ENCODE measurements at regions of chr9 and their contacts with region 1.

Region 1: DNA sequence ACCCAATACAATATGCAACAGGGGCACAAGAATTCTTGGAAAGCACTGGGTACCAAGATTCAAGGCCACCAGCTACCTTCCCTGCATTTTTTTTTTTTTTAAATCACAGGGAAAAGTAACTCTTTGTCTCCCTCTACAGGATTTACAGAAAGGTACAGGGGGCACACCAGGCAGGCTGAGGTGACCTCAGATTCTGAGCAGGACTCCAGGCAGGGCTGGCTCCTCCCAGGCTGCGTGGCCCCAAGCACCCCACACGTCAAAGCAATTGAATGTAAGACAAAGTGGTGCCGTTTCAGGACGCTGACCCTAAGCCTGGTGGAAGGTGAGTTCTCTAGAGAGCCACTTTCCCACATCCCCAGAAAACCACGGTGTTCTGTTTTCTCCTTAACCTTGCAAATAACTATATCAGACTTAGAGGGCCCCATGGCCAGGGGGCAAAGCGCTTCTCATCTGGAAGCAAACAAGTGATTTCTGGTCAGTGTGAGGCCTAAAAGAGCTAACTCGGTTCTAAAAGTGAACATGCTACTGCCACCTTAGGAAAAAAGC is 222.6 kb downstream of the ROR2 start:
- DNase-seq: no peak
- H3K4me3 ChIP-seq: no peak overlapping the region
- CTCF ChIP-seq: peak; percentile 46

Region 2: DNA sequence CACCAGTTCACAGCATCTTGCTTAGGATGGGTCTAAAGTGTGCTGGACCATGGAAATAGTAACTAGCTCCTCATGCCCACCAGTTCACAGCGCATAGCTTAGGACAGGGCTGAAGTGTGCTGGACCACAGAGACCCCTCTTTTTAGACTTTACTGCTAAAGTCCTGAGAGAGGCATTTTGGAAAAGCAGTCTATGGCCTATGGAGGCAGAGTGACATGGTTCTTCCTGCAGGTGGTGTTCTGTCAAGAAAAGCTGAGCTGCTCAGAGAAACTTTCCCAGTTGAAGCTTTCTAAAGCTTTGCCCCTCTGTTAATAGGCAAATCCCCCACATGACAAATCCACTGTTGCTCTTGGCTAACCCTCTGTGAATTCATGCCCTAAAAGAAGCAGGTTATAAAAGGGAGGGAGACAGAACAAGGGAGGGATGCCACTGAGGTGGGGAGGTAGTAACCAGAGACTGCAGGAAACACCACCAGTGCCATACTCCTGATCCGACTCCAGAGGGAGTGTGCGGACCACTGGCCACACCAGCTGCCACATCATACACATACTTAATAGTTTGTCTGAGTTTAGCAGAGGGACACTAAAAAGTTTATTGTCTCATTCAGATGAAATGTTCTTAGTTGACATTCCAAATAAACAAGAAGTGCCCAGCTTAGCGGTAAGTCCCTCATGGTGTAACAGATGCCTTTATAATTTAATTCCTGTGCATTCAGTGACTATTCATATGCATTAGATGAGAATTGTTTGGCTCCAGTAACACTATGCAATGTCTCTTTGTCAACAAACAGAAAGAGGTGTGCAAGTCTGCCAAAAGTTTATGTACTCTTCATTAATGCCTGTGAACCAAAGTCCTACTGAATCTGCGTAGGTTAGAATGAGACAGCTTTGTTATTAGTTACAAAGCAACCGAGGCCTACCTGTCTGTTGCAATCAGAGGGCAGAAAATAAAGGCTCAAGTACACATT is 67.6 kb before region 1 on chr9:
- CTCF ChIA-PET with region 1: interaction called, 20 read pairs
- POLR2A ChIA-PET with region 1: no interaction called
- DNase-seq: no peak
- H3K4me3 ChIP-seq: no peak overlapping the region
- CTCF ChIP-seq: peak; percentile 82

Region 3: DNA sequence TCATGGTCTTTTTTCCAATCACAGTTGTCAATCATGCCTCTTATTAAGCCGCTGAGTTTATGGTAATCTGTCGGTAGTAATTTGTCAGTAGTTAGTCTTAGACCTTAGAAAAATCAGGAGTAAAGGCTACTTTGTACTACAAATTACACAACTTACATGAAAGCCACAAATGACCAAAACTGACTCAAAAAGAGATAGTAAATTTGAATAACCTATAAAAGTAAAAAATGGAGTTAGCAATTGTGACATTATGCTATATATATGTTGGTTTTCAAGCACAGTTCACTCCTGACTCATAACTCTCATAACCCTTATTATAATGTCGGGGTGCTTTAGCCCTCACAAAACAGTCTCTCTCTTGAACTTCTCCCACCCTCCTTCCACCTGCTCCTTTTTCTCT is 29.1 kb before region 1 on chr9:
- CTCF ChIA-PET with region 1: no interaction called
- POLR2A ChIA-PET with region 1: no interaction called
- DNase-seq: no peak
- H3K4me3 ChIP-seq: no peak overlapping the region
- CTCF ChIP-seq: no peak

Region 4: DNA sequence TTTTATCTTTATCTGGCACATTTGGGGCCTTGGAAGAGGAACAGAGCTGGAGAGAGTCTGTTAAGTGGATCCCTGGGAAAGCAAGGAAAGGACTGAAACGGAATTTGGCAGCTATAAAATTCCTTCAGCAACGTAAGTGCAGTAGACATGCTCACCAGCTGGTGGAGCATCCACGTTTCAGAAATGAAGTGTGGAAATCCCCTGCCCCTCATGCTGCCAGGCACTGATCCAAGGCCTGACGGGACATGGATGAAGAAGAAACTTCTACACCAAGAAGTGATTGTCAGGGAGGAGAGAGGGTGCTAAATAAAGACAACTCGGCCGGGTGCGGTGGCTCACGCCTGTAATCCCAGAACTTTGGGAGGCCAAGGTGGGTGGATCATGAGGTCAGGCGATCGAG is 13.3 kb after region 1 on chr9:
- CTCF ChIA-PET with region 1: interaction called, 29 read pairs
- POLR2A ChIA-PET with region 1: no interaction called
- DNase-seq: peak; percentile 36
- H3K4me3 ChIP-seq: no peak overlapping the region
- CTCF ChIP-seq: peak; percentile 38

Region 5: GRCh38 chr9:92026206-92027002 is 299.0 kb after region 1 on chr9:
- CTCF ChIA-PET with region 1: no interaction called
- POLR2A ChIA-PET with region 1: no interaction called
- DNase-seq: no peak
- H3K4me3 ChIP-seq: no peak overlapping the region
- CTCF ChIP-seq: no peak